ENCODE measurements at regions of chr1 and their contacts with region 1.

Region 1: DNA sequence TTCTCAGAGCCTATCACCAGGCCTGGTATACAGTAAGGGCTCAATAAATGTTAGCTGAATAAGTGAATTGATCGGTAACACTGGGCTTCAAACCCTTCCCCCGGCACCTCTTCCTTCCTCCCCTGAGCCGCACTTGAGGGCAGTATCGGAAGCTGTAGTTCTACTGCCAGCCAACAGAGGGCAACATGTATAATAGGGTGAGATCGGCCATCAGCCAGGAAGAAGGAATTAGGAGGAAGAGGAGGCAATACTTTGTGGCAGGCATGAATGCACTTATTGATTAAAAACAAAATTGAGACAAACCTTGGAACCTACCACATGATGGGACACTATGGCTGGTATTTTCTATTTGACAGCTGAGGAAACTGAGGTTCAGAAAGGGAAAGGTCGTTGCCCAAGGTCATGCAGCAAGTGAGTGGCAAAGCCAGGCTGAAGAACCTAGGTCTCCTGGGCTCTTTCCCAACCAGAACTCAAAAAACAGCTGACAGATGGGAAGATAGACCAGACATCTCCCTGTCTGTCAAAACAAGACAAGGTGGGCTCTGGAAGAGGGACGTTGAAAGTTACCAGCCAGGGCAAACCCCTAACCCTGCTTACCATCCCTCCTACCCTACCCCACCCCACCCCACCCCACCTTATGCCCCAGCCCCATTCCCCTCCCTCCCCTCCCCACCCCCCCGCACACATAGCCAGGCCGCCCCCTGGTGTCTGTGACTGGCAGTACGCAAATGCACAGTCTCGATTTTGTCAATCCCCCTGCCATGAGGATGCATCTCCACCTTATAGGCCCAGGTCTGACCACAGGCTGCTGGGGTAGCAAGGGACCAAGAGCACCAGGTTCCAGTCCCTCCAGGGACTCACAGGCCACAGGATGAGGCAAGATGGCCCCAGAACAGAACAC is 107.3 kb upstream of the RUNX3 start:
- DNase-seq: peak; percentile 82
- H3K4me3 Mint-ChIP-seq: no peak overlapping the region
- H3K27ac Mint-ChIP-seq: no peak overlapping the region
- H3K4me1 Mint-ChIP-seq: peaks cover 28% of the 10 kb centered on the region
- H3K27me3 Mint-ChIP-seq: no peaks in the 10 kb centered on the region

Region 2: DNA sequence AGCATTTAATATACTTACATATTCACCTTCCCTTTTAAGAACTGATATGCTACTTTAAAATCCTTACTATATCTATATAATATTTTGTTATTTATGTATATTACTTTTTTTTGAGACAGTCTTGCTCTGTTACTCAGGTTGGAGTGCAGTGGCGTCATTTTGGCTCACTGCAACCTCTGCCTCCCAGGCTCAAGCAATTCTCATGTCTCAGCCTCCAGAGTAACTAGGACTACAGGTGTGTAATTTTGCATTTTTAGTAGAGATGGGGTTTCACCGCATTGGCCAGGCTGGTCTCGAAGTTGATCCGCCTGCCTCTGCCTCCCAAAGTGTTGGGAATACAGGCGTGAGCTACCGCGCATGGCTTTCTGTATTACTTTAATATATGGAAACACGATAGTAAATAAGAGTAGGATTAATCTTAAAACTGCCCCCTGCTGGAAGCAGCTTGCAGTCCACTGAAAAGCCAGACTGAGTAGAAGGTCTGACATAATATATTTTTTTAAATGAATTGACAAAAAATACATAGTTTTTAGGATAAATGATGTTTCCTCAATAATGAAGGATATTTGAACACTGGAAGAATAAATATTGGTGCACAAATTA is 510.4 kb before region 1 on chr1:
- CTCF ChIA-PET with region 1: no interaction called
- intact Hi-C with region 1: no loop called
- DNase-seq: peak; percentile 74
- H3K4me3 Mint-ChIP-seq: no peak overlapping the region
- H3K27ac Mint-ChIP-seq: peak overlapping the region; percentile 63
- H3K4me1 Mint-ChIP-seq: peaks cover 70% of the 10 kb centered on the region
- H3K27me3 Mint-ChIP-seq: no peaks in the 10 kb centered on the region

Region 3: GRCh38 chr1:24744911-24745710 is 292.3 kb before region 1 on chr1 and contains the start of gene CLIC4:
- CTCF ChIA-PET with region 1: no interaction called
- intact Hi-C with region 1: loop called (anchors 10 kb)
- DNase-seq: peak; percentile 100
- H3K4me3 Mint-ChIP-seq: peak within 1 kb of the TSS; percentile 88
- H3K27ac Mint-ChIP-seq: peak within 1 kb of the TSS; percentile 77
- H3K4me1 Mint-ChIP-seq: peaks cover 52% of the 10 kb centered on the region
- H3K27me3 Mint-ChIP-seq: no peaks in the 10 kb centered on the region
- total RNA-seq, gene CLIC4: 38.0 to 44.3 TPM

Region 4: GRCh38 chr1:24910751-24911650 is 126.4 kb before region 1 on chr1:
- CTCF ChIA-PET with region 1: interaction called, 10 read pairs
- intact Hi-C with region 1: no loop called
- DNase-seq: peak; percentile 75
- H3K4me3 Mint-ChIP-seq: no peak overlapping the region
- H3K27ac Mint-ChIP-seq: peak overlapping the region; percentile 85
- H3K4me1 Mint-ChIP-seq: peaks cover 42% of the 10 kb centered on the region
- H3K27me3 Mint-ChIP-seq: no peaks in the 10 kb centered on the region

Region 5: GRCh38 chr1:24930204-24931145 is 106.9 kb before region 1 on chr1 and contains the start of gene RUNX3:
- CTCF ChIA-PET with region 1: interaction called, 144 read pairs
- intact Hi-C with region 1: loop called (anchors 1 kb)
- DNase-seq: peak; percentile 93
- H3K4me3 Mint-ChIP-seq: peak within 1 kb of the TSS; percentile 94
- H3K27ac Mint-ChIP-seq: peak within 1 kb of the TSS; percentile 92
- H3K4me1 Mint-ChIP-seq: peaks cover 66% of the 10 kb centered on the region
- H3K27me3 Mint-ChIP-seq: no peaks in the 10 kb centered on the region
- total RNA-seq, gene RUNX3: 72.3 to 83.8 TPM

Region 6: GRCh38 chr1:24964811-24965570 is 72.4 kb before region 1 on chr1:
- CTCF ChIA-PET with region 1: interaction called, 60 read pairs
- intact Hi-C with region 1: loop called (anchors 1 kb)
- DNase-seq: peak; percentile 97
- H3K4me3 Mint-ChIP-seq: peak overlapping the region; percentile 92
- H3K27ac Mint-ChIP-seq: peak overlapping the region; percentile 98
- H3K4me1 Mint-ChIP-seq: peaks cover 82% of the 10 kb centered on the region
- H3K27me3 Mint-ChIP-seq: no peaks in the 10 kb centered on the region

Region 7: GRCh38 chr1:24987875-24988557 is 49.4 kb before region 1 on chr1:
- CTCF ChIA-PET with region 1: interaction called, 10 read pairs
- intact Hi-C with region 1: no loop called
- DNase-seq: peak; percentile 73
- H3K4me3 Mint-ChIP-seq: no peak overlapping the region
- H3K27ac Mint-ChIP-seq: peak overlapping the region; percentile 84
- H3K4me1 Mint-ChIP-seq: peaks cover 95% of the 10 kb centered on the region
- H3K27me3 Mint-ChIP-seq: no peaks in the 10 kb centered on the region

Region 8: GRCh38 chr1:25022361-25023189 is 14.8 kb before region 1 on chr1:
- CTCF ChIA-PET with region 1: interaction called, 21 read pairs
- intact Hi-C with region 1: no loop called
- DNase-seq: peak; percentile 98
- H3K4me3 Mint-ChIP-seq: peak overlapping the region; percentile 71
- H3K27ac Mint-ChIP-seq: peak overlapping the region; percentile 96
- H3K4me1 Mint-ChIP-seq: peaks cover 86% of the 10 kb centered on the region
- H3K27me3 Mint-ChIP-seq: no peaks in the 10 kb centered on the region